Caco-2 (cell line): ENCODE measurements at regions of chr12 and their contacts with region 1.

Region 1: DNA sequence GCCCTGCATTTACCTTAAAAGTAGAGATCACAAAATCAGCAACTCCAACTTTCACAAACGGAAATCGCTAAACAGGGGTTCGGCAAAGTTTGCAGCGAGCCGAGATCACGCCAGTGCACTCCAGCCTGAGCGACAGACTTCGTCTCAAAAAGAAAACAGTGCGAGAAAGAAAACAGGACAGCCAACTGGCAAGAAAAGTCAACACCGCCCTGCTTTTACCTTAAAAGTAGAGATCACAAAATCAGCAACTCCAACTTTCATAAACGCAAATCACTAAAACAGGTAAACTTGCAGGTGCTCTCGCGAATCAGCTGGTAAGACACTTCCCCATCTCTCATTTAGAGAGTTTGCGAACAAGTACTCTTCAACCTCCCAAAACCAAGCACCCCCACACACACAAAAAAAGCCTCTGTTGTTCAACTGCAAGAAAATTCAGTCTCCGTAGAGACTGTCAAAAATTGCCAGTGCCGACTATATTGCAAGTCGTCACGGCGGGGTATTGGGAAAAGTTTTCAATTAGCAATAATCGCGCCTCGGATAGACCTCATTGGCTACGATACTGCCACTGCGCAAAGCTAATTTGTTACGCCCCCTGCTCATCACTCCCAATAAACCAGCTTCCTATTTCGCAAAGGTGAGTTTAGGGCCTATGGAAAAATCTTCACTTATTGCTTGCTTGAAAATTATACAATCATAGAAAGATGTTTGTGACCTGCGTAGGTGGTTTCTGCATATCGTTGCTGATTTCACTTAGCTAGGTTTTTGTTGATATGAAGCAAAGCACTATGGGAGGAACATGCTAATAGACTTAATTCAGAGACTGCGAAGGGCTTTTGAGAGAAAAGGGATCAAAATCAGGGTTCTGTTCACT is at the start of gene RNU4-1:
- DNase-seq: peak; percentile 89 to 93
- H3K4me3 ChIP-seq: peak within 1 kb of the TSS; percentile 48
- H3K4me3 Mint-ChIP-seq: peak within 1 kb of the TSS; percentile 14
- H3K27ac Mint-ChIP-seq: no peak within 1 kb of the TSS
- H3K4me1 ChIP-seq: peaks cover 7% of the 10 kb centered on the region
- H3K4me1 Mint-ChIP-seq: no peaks in the 10 kb centered on the region
- H3K27me3 ChIP-seq: no peaks in the 10 kb centered on the region
- H3K27me3 Mint-ChIP-seq: no peaks in the 10 kb centered on the region
- CTCF ChIP-seq: no peak
- total RNA-seq, gene RNU4-1: 3,380 and 3,645 TPM in 2 replicates

Region 2: DNA sequence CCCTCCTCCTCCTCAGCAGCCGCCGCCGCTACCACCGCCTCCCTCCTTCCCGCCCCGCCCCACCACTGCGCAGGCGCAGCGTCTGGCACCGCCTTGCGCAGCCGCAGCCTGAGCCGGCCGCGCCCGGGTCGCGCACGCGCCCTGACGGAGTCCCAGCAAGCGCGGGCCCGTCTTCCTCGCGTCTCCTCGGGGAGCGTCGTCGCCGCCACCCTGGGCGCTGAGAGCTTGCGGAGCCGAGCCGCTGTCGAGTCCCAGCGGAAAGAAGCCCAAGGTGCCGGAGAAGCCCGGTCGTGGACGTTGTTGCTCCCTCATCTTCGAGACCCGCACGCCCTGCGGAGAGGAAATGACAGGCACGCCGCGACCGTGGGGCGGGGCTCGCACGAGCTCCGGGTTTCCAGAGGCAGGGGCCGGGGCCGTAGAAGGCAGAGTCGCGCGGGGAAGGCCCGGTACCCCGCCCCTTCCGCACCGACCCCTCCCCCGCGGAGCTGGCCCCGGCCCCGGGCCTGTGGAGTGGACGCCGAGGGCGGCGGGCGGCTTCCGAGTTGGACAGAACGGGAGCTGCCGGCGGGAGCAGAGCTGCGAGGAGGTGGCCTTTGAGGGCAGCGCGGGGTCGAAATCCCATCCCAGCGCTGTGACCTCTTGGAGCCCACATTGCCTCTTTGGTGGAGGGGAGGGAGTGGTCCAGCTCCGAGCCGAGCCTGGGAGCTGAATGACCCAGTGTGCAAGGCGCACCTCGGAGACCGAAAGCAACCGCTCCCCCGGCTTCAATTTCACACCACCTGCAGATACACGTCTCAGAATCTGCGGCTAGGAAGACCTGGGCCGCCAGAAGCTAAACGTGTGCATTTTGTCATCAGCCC is 175.9 kb before region 1 on chr12:
- CTCF ChIA-PET with region 1: no interaction called
- POLR2A ChIA-PET with region 1: interaction called, 11 read pairs
- intact Hi-C with region 1: no loop called
- DNase-seq: peak; percentile 96 to 99
- H3K4me3 ChIP-seq: peak overlapping the region; percentile 86
- H3K4me3 Mint-ChIP-seq: peak overlapping the region; percentile 84
- H3K27ac Mint-ChIP-seq: peak overlapping the region; percentile 92
- H3K4me1 ChIP-seq: peaks cover 26% of the 10 kb centered on the region
- H3K4me1 Mint-ChIP-seq: peaks cover 24% of the 10 kb centered on the region
- H3K27me3 ChIP-seq: no peaks in the 10 kb centered on the region
- H3K27me3 Mint-ChIP-seq: no peaks in the 10 kb centered on the region
- CTCF ChIP-seq: no peak

Region 3: DNA sequence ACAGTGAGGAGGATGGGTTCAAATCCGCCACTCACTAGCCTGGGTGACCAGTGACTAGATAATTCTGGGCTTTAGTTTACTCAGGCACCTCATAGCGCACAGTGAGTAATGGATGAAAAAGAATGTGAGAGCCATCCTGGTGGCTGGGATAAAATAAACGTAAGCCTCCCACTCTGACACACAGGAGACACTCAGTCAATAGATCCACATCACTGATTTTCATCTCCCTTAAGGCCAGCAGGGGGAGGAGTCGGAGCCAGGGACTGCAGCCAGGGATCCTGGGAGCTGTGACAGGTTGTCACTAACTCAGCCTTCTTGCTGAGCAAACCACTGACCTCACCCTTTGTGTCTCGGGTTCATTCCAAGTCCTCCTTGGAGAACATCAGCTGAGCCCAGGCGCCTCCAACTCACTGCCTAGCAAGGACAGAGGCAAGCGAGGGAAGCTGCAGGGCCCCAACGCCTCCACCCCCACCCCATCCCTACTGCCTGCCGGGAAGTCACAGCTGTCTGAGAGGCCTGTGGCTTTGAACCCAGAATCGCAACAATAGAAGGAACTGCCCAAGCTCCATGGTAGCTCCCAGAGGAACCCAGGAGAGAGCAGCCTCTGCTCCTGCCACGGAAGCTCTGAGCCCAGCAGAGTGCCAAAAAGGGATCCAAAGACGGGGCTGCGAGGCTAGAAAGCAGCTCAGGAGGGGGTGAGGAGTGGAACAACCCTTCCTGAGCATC is 58.1 kb before region 1 on chr12:
- CTCF ChIA-PET with region 1: interaction called, 5 read pairs
- POLR2A ChIA-PET with region 1: interaction called, 297 read pairs
- intact Hi-C with region 1: no loop called
- DNase-seq: peak; percentile 82 to 83
- H3K4me3 ChIP-seq: no peak overlapping the region
- H3K4me3 Mint-ChIP-seq: no peak overlapping the region
- H3K27ac Mint-ChIP-seq: peak overlapping the region; percentile 71
- H3K4me1 ChIP-seq: peaks cover 82% of the 10 kb centered on the region
- H3K4me1 Mint-ChIP-seq: peaks cover 63% of the 10 kb centered on the region
- H3K27me3 ChIP-seq: no peaks in the 10 kb centered on the region
- H3K27me3 Mint-ChIP-seq: no peaks in the 10 kb centered on the region
- CTCF ChIP-seq: peak; percentile 51 to 69

Region 4: DNA sequence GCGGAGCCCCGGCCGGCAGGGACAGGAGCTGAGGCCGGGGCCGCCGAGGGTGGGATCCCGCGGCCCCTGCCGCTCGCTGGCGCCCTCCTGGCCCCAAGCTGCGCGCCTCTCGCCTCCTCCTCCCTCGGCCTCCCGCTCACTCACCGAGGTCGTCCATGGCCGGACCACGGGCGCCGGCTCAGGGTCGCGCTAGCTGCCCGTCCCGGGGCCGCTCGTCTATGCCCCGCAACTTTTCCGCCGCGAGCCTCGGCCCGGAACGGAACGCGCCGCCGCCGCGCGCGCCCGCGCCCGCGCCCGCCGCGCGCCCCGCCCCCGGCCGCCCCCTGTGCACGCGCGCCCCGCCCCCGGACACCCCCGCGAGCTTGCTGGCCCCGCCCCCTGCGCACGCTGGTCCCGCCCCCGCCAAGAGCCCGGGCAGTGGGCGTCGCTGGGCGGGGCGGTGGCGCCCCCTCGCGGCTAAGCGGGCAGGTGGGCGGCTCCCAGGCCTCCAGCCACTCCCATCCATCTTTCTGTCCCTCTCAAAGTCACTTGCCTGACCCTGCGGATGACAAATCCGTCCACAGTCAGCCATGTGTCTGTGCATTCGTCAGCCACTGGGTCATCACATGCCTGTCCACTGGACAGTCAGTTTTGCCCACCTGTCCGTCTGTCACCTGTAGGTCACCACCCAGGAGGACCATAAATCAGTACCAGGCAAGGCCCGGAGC is 27.3 kb before region 1 on chr12 and contains the start of gene PXN:
- CTCF ChIA-PET with region 1: interaction called, 7 read pairs
- POLR2A ChIA-PET with region 1: interaction called, 43 read pairs
- intact Hi-C with region 1: no loop called
- DNase-seq: peak; percentile 85 to 95
- H3K4me3 ChIP-seq: peak within 1 kb of the TSS; percentile 96
- H3K4me3 Mint-ChIP-seq: peak within 1 kb of the TSS; percentile 91
- H3K27ac Mint-ChIP-seq: peak within 1 kb of the TSS; percentile 86
- H3K4me1 ChIP-seq: peaks cover 42% of the 10 kb centered on the region
- H3K4me1 Mint-ChIP-seq: peaks cover 14% of the 10 kb centered on the region
- H3K27me3 ChIP-seq: no peaks in the 10 kb centered on the region
- H3K27me3 Mint-ChIP-seq: no peaks in the 10 kb centered on the region
- CTCF ChIP-seq: peak; percentile 66 to 84
- total RNA-seq, gene PXN: 150 and 162 TPM in 2 replicates

Region 5: GRCh38 chr12:120317224-120318105 is 24.6 kb after region 1 on chr12:
- CTCF ChIA-PET with region 1: interaction called, 6 read pairs
- POLR2A ChIA-PET with region 1: interaction called, 32 read pairs
- intact Hi-C with region 1: no loop called
- DNase-seq: peak; percentile 100
- H3K4me3 ChIP-seq: peak overlapping the region; percentile 49
- H3K4me3 Mint-ChIP-seq: peak overlapping the region; percentile 95
- H3K27ac Mint-ChIP-seq: peak overlapping the region; percentile 99
- H3K4me1 ChIP-seq: peaks cover 22% of the 10 kb centered on the region
- H3K4me1 Mint-ChIP-seq: peaks cover 13% of the 10 kb centered on the region
- H3K27me3 ChIP-seq: no peaks in the 10 kb centered on the region
- H3K27me3 Mint-ChIP-seq: no peaks in the 10 kb centered on the region
- CTCF ChIP-seq: peak; percentile 52 to 77